ENCODE measurements at regions of chr6 and their contacts with region 1.

Region 1: DNA sequence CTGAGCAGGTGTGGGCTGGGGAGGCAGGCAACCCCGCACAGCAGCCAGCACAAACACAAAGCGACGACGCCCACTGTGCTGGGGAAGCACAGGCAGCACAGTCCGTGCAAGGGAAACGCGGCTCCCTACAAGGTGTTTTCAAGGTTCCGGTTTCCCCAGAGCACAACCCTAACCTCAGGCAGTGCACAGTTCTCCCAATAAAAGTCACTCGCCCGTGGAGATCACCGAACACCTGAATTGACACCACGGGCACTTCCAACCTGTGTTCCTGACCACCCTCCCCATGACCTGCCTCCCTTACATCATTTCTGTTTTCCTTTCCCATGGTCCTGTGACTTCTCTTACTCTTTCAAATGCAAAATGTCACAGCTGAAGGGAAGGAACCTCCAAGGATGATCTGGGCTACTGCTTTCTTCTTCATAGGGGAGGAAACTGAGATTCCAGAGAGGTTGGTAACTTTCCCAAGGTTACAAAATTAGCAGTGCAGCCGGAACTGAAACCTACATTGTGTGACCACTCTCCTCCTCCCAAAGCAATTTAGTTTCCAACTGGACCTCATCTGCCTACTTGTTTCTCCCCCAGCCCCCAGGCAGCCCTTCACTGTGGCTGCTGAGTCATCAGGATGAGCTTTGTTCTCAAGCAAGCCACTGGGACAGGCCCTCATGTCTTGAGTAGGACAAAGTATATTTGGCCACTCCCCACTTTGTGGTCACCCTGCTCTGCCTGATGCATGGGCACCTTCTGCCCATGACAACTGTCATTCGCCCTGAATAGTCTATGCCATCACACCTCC is 125.3 kb downstream of the ATXN1 start:
- DNase-seq: no peak
- H3K4me3 Mint-ChIP-seq: no peak overlapping the region
- H3K27ac Mint-ChIP-seq: peak overlapping the region; percentile 44
- H3K4me1 Mint-ChIP-seq: peaks cover 55% of the 10 kb centered on the region
- H3K27me3 Mint-ChIP-seq: no peaks in the 10 kb centered on the region

Region 2: GRCh38 chr6:16602035-16602434 is 34.0 kb before region 1 on chr6:
- intact Hi-C with region 1: loop called (anchors 5 kb)
- DNase-seq: no peak
- H3K4me3 Mint-ChIP-seq: peak overlapping the region; percentile 28
- H3K27ac Mint-ChIP-seq: peak overlapping the region; percentile 75
- H3K4me1 Mint-ChIP-seq: peaks cover 49% of the 10 kb centered on the region
- H3K27me3 Mint-ChIP-seq: no peaks in the 10 kb centered on the region

Region 3: GRCh38 chr6:16651871-16652270 is 15.9 kb after region 1 on chr6:
- intact Hi-C with region 1: loop called (anchors 2 kb)
- DNase-seq: peak; percentile 42
- H3K4me3 Mint-ChIP-seq: peak overlapping the region; percentile 20
- H3K27ac Mint-ChIP-seq: peak overlapping the region; percentile 87
- H3K4me1 Mint-ChIP-seq: peaks cover 59% of the 10 kb centered on the region
- H3K27me3 Mint-ChIP-seq: no peaks in the 10 kb centered on the region

Region 4: GRCh38 chr6:16800942-16801341 is 164.9 kb after region 1 on chr6:
- intact Hi-C with region 1: no loop called
- DNase-seq: no peak
- H3K4me3 Mint-ChIP-seq: peak overlapping the region; percentile 21
- H3K27ac Mint-ChIP-seq: no peak overlapping the region
- H3K4me1 Mint-ChIP-seq: peaks cover 18% of the 10 kb centered on the region
- H3K27me3 Mint-ChIP-seq: peaks cover 17% of the 10 kb centered on the region

Measured in activated T-helper 1 cell treated with anti-CD3 and anti-CD28 coated beads, Interleukin-12 subunit alpha, Interleukin-12 subunit beta, Interleukin-2, Interleukin-4 antibody, amounts not matched to agents 30 ng/mL and 10 ng/mL and 1 ng/mL, durations not matched to agents 14 hours and 24 hours and 36 hours (primary cell).